ENCODE measurements at regions of chr12 and their contacts with region 1.

Region 1: DNA sequence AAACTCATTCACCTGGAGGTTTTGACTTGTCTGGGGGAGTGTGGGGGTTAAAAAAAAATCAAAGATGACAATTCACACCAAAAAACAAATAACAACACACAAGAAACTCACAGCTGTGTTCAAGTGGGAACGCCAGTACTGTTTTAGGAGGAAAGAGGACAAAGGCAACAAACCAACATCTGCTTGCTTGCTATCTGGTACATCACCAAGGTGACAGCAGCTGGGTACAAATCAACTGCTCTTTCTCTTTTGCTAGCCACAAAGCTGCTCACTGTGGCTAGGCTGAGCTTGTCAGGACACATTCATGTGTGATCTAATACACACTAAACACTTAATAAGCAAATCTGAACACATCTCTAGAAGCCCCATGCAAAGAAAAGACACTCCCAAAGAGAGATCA is 128.0 kb upstream of the RAP1B start:
- DNase-seq: peak; percentile 38
- H3K4me3 Mint-ChIP-seq: peak overlapping the region; percentile 9
- H3K27ac Mint-ChIP-seq: peak overlapping the region; percentile 93
- H3K4me1 Mint-ChIP-seq: peaks cover 42% of the 10 kb centered on the region
- H3K27me3 Mint-ChIP-seq: no peaks in the 10 kb centered on the region

Region 2: DNA sequence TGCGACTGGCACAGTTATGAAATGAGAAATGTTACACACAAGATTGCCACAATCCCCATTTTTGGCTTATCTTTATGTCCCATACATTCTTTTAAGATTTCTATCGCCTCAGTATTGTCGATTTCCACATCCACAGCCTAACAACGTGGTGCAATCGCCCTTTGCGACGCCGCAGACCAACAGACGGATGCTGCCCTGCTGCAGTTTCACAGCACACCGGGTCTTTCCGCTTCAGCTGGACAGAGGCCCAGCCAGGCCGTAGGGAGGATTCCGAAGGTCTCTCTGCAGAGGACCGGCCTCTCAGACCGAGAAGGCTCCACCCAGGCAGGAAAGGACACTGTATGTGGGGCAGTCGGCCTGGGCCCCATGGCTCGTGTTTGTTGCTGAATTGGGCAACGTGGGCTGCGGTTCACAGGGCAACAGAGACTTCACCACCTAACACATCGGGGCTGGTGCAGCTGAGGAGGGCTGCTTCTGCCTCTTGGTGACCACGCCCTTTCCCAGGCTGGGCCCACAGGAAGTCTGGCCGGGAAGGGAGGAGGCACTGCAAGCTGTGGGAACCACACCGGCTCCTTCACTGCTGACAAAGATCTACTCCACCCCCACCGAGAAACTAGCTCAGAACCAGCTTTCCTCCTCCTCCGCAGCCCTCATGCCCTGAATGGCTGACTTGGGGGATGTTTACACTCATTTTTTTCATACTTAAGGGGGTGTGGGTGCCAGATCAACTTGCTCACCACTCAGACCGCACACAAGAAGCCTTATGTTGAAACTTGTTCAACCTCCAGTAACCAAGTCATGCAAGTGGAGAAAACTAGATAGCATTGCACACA is 117.6 kb before region 1 on chr12:
- intact Hi-C with region 1: loop called (anchors 2 kb)
- DNase-seq: peak; percentile 85
- H3K4me3 Mint-ChIP-seq: peak overlapping the region; percentile 61
- H3K27ac Mint-ChIP-seq: peak overlapping the region; percentile 84
- H3K4me1 Mint-ChIP-seq: peaks cover 42% of the 10 kb centered on the region
- H3K27me3 Mint-ChIP-seq: no peaks in the 10 kb centered on the region

Region 3: DNA sequence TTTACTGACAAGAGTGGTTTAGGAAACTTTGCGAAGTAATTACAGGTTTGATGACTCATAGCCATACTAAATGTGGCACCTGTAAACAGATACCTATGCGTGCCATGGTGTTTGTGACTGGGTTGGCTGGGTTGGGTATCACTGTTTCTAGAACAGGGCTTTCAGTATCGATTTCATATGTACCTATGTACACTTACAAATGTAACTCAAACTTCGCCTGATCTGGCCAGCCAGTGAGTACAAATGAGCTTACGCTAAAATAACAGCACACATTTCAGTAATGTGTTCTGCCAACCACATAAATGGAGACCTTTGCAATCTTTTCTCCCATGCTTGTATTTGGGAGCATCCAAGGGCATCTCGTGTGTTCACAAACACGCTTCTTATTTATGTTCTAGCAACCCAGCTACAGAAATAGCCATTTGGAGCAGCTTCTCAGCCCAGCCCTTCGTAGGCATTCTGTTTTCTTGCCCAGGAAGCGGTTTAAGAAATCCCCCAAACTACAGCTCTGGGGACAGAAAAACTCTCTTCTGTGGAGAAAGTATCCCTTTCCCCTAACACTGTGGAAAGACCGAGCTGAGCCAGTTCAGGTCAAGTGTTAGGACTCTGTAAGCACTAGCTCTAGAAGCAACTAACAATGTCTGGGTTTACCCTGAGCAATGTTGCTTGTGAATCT is 108.2 kb before region 1 on chr12:
- intact Hi-C with region 1: loop called (anchors 1 kb)
- DNase-seq: peak; percentile 57
- H3K4me3 Mint-ChIP-seq: no peak overlapping the region
- H3K27ac Mint-ChIP-seq: peak overlapping the region; percentile 91
- H3K4me1 Mint-ChIP-seq: peaks cover 30% of the 10 kb centered on the region
- H3K27me3 Mint-ChIP-seq: no peaks in the 10 kb centered on the region

Region 4: GRCh38 chr12:68497702-68498101 is 15.0 kb after region 1 on chr12:
- intact Hi-C with region 1: loop called (anchors 1 kb)
- DNase-seq: no peak
- H3K4me3 Mint-ChIP-seq: peak overlapping the region; percentile 51
- H3K27ac Mint-ChIP-seq: peak overlapping the region; percentile 86
- H3K4me1 Mint-ChIP-seq: peaks cover 33% of the 10 kb centered on the region
- H3K27me3 Mint-ChIP-seq: peaks cover 3% of the 10 kb centered on the region

Region 5: DNA sequence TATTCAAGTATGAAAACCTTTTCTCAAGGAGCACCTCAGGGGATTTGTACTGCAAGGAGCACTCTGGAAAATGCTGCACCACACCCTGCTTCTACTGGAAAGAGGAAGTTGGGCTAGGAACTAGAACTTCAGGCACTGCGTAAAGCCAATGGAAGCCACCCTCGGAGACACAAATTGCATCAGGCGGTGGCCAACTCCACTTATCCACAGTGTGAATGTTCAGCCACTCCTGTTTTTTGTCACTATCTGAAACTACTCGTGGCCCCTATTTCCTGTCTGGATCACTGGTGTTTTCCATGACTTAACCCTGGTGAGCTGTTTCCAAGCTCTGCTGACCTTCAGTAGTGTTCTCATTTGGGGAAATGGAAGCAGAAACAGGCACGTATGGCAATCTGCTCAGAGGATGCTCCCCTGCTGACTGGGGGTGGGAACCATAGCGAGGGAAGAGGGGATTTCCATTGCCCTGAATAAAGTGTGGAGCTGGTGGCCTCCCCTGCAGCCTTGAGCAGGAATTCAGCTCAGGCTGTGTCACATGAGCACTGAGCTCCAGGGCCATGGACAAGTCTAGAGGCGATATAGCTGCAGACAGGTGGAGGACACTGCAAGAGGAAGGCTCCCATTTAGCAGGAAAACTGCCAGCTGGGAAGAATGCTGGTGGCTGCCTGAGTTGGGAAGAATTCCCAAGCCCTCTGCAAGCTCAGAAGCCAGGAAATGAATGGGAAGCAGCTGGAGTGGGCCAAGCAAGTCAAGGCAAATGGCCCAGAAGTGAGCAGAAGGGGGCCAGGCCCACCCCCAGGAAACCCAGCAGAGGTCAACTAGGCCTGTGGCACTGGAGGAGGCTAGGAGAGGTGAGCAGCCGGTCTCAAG is 77.6 kb after region 1 on chr12:
- intact Hi-C with region 1: loop called (anchors 5 kb)
- DNase-seq: no peak
- H3K4me3 Mint-ChIP-seq: no peak overlapping the region
- H3K27ac Mint-ChIP-seq: no peak overlapping the region
- H3K4me1 Mint-ChIP-seq: peaks cover 41% of the 10 kb centered on the region
- H3K27me3 Mint-ChIP-seq: peaks cover 5% of the 10 kb centered on the region

Region 6: DNA sequence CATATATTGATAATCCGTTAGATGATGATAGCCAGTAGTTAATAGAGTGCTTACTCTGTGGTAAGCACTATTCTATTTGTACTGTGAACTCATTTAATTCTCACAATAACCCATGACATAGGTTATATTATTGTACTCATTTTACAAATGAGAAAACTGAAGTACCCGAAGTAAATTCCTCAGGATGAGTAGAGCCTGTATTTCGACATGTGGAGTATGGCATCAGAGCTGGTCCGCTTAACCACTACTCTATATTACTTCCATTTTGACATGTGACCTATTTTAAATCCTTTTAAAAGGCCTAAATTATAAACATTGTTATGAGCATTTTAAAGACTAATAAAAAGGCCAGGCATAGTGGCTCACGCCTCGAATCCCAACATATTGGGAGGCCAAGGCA is 120.1 kb after region 1 on chr12:
- intact Hi-C with region 1: no loop called
- DNase-seq: no peak
- H3K4me3 Mint-ChIP-seq: no peak overlapping the region
- H3K27ac Mint-ChIP-seq: no peak overlapping the region
- H3K4me1 Mint-ChIP-seq: peaks cover 28% of the 10 kb centered on the region
- H3K27me3 Mint-ChIP-seq: no peaks in the 10 kb centered on the region

Region 7: DNA sequence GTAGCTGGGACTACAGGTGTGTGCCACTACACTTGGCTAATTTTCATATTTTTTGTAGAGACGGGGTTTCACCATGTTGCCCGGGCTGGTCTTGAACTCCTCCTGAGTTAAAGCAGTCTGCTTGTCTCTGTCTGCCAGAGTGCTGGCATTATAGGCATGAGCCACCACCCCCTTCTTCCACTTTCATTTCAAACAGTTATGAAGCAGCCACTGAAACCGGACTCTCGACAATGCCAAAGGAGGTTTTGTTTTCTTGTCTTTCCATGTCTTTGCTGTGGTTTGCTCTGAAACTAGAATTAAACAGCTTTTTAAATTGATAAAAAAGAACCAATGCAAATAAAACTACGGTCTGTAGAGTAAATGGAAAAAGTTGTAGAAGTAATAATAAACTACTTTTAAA is 158.5 kb after region 1 on chr12:
- intact Hi-C with region 1: loop called (anchors 5 kb)
- DNase-seq: peak; percentile 48
- H3K4me3 Mint-ChIP-seq: peak overlapping the region; percentile 6
- H3K27ac Mint-ChIP-seq: peak overlapping the region; percentile 28
- H3K4me1 Mint-ChIP-seq: peaks cover 57% of the 10 kb centered on the region
- H3K27me3 Mint-ChIP-seq: no peaks in the 10 kb centered on the region

Region 8: GRCh38 chr12:68686595-68687521 is 204.2 kb after region 1 on chr12 and contains the start of gene NUP107:
- intact Hi-C with region 1: loop called (anchors 2 kb)
- DNase-seq: peak; percentile 94
- H3K4me3 Mint-ChIP-seq: peak within 1 kb of the TSS; percentile 93
- H3K27ac Mint-ChIP-seq: peak within 1 kb of the TSS; percentile 93
- H3K4me1 Mint-ChIP-seq: peaks cover 31% of the 10 kb centered on the region
- H3K27me3 Mint-ChIP-seq: no peaks in the 10 kb centered on the region
- total RNA-seq, gene NUP107: 101 and 106 TPM in 2 replicates

Measured in activated T-helper 2 cell treated with anti-CD3 and anti-CD28 coated beads, Interferon-gamma antibody, Interleukin-2, Interleukin-4, amounts not matched to agents 10 μg/mL and 5 μg/mL and 100 μg/mL, durations not matched to agents 14 hours and 24 hours and 36 hours (primary cell).